HEK293 (cell line): ENCODE measurements at regions of chr11 and their contacts with region 1.

Region 1: DNA sequence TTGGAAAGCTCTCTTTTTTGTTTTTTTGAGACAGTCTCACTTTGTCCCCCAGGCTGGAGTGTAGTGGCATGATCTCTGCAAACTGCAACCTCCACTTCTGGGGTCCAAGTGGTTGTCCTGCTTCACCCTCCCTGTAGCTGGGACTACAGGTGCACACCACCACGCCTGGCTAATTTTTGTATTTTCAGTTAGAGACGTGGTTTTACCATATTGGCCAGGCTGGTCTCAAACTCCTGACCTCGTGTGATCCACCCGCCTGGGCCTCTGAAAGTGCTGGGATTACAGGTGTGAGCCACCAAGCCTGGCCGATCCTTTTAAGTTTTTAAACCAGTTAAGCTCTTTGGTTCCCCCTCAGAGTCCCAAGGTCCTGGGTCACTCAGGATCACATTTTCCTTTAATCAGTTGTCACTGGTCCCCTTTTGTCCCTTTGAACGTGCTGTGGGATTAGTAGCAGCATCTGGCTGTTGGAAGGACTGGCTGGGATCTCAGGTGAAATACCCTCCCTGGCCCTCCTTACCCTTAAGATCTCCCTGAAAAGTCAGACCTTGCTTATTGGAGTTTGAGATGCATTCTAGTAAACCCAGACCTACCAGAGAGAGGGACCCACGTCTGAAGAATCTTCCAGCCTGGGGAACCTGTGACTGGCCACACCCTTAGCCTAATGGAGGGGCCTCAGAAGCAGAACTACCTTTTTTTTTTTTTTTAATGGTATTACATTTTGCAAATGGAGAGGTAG is 8.1 kb downstream of the MALAT1 start:
- H3K4me3 ChIP-seq: peak overlapping the region; percentile 27
- H3K27ac ChIP-seq: peak overlapping the region; percentile 24; the same call in 1 of the 2 replicates
- H3K4me1 ChIP-seq: no peaks in the 10 kb centered on the region
- CTCF ChIP-seq: no peak

Region 2: GRCh38 chr11:65274735-65275682 is 231.9 kb before region 1 on chr11:
- CTCF ChIA-PET with region 1: interaction called, 10 read pairs
- POLR2A ChIA-PET with region 1: no interaction called
- H3K4me3 ChIP-seq: no peak overlapping the region
- H3K27ac ChIP-seq: no peak overlapping the region
- H3K4me1 ChIP-seq: no peaks in the 10 kb centered on the region
- CTCF ChIP-seq: 0 out of 2 replicates have a peak, but pooled peaks have one; percentile 43

Region 3: GRCh38 chr11:65382033-65382807 is 124.7 kb before region 1 on chr11 and contains the start of gene SLC25A45:
- CTCF ChIA-PET with region 1: interaction called, 11 read pairs
- POLR2A ChIA-PET with region 1: interaction called, 12 read pairs
- H3K4me3 ChIP-seq: peak within 1 kb of the TSS; percentile 24
- H3K27ac ChIP-seq: peak within 1 kb of the TSS; percentile 93
- H3K4me1 ChIP-seq: peaks cover 6% of the 10 kb centered on the region; the same call in 1 of the 2 replicates
- CTCF ChIP-seq: peak; percentile 98

Region 4: GRCh38 chr11:65471410-65471762 is 35.6 kb before region 1 on chr11:
- CTCF ChIA-PET with region 1: interaction called, 69 read pairs
- POLR2A ChIA-PET with region 1: interaction called, 560 read pairs
- H3K4me3 ChIP-seq: no peak overlapping the region
- H3K27ac ChIP-seq: peak overlapping the region; percentile 62
- H3K4me1 ChIP-seq: peaks cover 5% of the 10 kb centered on the region
- CTCF ChIP-seq: peak; percentile 42; the same call in 1 of the 2 replicates

Region 5: GRCh38 chr11:65569973-65570918 is 63.3 kb after region 1 on chr11 and contains the start of gene ZNRD2:
- CTCF ChIA-PET with region 1: interaction called, 8 read pairs
- POLR2A ChIA-PET with region 1: interaction called, 10 read pairs
- H3K4me3 ChIP-seq: peak within 1 kb of the TSS; percentile 74
- H3K27ac ChIP-seq: peak within 1 kb of the TSS; percentile 93
- H3K4me1 ChIP-seq: peaks cover 16% of the 10 kb centered on the region; the same call in 1 of the 2 replicates
- CTCF ChIP-seq: peak; percentile 92

Region 6: DNA sequence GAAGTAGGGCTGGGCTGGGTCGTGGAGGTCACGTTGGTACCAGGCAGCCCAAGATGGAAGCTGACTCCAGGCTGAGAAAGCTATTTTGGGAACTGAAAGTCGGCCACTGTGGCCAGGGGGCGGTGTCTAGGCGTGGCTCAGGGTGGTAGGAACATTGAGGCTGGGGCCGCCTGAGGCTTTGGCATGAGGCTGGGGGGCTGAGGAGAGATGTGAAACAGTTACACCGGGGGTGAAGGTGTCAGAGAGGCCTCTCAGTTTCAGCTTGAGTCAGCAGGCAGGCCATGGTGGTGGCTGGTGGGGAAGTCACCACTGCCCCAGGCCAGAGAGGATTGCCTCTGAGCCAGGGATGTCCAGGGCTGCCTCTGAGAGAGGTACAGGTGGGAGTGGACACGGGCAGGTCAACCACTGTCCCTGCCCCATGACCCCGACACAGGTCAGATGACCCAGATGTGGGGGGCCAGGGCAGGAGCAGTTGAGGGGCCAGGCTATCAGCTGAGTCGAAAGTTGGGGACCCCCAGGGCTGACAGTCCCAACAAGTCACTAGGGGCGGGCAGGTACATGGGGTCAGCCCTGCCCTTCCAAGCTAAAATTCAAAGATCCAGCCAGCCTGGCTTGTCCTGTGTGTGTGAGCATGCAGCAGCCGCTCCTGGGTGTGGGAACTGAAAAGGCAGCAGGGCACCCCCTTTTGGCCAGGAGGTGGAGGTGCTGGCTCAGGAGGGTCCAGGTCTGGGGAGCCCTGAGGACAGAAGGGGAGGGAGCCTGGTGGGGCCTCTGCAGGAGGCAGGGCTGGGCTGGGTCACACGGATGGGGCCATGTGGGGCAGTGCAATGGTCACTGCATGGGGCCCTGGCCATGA is 81.5 kb after region 1 on chr11:
- CTCF ChIA-PET with region 1: no interaction called
- POLR2A ChIA-PET with region 1: no interaction called
- H3K4me3 ChIP-seq: no peak overlapping the region
- H3K27ac ChIP-seq: no peak overlapping the region
- H3K4me1 ChIP-seq: no peaks in the 10 kb centered on the region
- CTCF ChIP-seq: peak; percentile 35; the same call in 1 of the 2 replicates